Ascending aorta (tissue), 2 donors: ENCODE measurements at regions of chr2 and their contacts with region 1.

Region 1: DNA sequence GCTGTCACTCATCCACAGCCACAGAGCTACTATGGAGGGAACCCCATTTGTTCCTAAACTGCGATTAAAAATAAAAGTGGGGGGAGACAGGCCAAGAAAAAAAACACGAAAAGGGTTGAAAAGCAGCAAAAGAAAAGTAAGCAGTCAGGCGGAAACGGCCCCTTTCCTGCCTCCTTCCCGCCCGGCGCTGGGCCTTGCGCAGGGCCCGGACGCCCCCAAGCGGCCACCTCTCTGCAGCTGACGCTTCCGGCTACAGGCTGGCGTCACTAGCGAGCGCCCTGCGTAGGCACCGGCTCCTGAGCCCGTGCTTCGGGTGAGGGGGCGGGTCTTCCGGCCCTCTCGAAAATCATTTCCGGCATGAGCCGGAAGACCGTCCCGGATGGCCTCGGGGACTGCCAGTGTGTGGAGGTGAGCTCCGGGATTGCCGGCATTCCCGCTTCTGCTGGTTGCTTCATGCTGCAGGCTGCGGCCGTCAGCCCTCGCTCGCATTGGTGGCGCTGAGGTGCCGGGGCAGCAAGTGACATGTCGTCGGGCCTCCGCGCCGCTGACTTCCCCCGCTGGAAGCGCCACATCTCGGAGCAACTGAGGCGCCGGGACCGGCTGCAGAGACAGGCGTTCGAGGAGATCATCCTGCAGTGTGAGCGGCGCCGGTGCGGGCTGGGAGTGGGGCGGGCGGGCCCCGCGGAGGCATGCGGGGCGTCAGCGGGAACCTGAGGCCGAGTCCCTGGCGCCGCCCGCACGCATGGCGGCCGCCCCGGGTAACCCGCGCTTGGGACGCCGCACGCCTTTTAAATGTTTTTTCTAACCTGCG is at the start of gene ATG16L1:
- DNase-seq: peak; percentile 78 to 97
- H3K4me3 ChIP-seq: peak within 1 kb of the TSS; percentile 68 to 79
- H3K27ac ChIP-seq: peak within 1 kb of the TSS; percentile 71 to 88
- H3K4me1 ChIP-seq: peaks cover 3 to 14% of the 10 kb centered on the region in 2 donors
- H3K27me3 ChIP-seq: no peaks in the 10 kb centered on the region
- CTCF ChIP-seq: peak; percentile 93 to 96 (median 94)
- total RNA-seq, gene ATG16L1: 28.1 TPM

Region 2: GRCh38 chr2:232600053-232600773 is 651.3 kb before region 1 on chr2:
- intact Hi-C with region 1: loop called (anchors 1 kb)
- DNase-seq: no peak
- H3K4me3 ChIP-seq: no peak overlapping the region
- H3K27ac ChIP-seq: no peak overlapping the region
- H3K4me1 ChIP-seq: no peaks in the 10 kb centered on the region
- H3K27me3 ChIP-seq: no peaks in the 10 kb centered on the region
- CTCF ChIP-seq: no peak

Region 3: GRCh38 chr2:232854082-232854481 is 397.4 kb before region 1 on chr2:
- intact Hi-C with region 1: loop called (anchors 2 kb)
- DNase-seq: no peak
- H3K4me3 ChIP-seq: no peak overlapping the region
- H3K27ac ChIP-seq: no peak overlapping the region
- H3K4me1 ChIP-seq: no peaks in the 10 kb centered on the region
- H3K27me3 ChIP-seq: no peaks in the 10 kb centered on the region
- CTCF ChIP-seq: no peak

Region 4: GRCh38 chr2:233098615-233099014 is 152.9 kb before region 1 on chr2:
- intact Hi-C with region 1: loop called (anchors 5 kb)
- DNase-seq: no peak
- H3K4me3 ChIP-seq: no peak overlapping the region
- H3K27ac ChIP-seq: no peak overlapping the region
- H3K4me1 ChIP-seq: no peaks in the 10 kb centered on the region
- H3K27me3 ChIP-seq: no peaks in the 10 kb centered on the region
- CTCF ChIP-seq: peak in 2 of 3 experiments; percentile 9 to 21

Region 5: DNA sequence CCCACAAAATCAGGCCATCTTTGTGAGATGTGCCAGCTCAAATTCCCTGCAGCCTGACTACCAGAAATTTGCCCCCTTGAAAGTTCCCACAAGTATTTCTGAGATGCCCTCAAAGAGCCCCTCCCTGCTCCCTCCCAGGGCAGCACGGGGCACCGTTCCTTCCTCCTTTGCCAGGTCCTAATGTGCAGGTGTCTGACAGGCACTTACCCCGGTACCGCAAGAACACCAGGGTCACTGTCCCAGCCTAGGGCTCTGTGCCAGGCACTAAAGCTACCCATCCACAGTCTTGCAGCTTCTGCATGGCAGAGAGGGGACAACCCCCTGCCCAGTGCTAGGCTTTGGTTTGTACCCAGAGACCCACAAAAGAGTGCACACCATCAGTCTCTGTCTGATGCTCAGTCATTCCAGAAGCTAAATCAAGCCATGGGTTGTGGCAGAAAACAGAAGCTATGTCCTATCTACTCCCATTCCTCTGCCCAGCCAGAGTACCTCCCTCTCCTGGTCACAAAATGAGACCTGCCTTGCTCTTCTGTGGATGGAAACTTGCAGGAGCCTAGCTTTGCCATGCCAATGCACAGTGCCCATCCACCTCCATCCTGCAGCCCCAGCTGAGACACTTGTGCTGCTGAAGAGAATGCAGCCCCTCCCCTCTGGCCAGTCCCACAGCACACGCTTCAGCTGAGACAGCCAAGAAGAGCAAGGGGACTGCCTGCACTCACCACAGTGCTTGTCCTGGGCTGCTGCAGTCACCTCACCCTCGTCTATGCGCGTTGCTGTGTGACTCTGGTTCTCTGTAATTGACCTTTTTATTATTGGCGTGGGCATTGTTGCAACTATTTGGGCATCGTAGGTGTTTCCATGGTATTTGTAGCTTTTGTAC is 142.7 kb before region 1 on chr2:
- intact Hi-C with region 1: no loop called
- DNase-seq: no peak
- H3K4me3 ChIP-seq: no peak overlapping the region
- H3K27ac ChIP-seq: no peak overlapping the region
- H3K4me1 ChIP-seq: no peaks in the 10 kb centered on the region
- H3K27me3 ChIP-seq: no peaks in the 10 kb centered on the region
- CTCF ChIP-seq: no peak

Region 6: DNA sequence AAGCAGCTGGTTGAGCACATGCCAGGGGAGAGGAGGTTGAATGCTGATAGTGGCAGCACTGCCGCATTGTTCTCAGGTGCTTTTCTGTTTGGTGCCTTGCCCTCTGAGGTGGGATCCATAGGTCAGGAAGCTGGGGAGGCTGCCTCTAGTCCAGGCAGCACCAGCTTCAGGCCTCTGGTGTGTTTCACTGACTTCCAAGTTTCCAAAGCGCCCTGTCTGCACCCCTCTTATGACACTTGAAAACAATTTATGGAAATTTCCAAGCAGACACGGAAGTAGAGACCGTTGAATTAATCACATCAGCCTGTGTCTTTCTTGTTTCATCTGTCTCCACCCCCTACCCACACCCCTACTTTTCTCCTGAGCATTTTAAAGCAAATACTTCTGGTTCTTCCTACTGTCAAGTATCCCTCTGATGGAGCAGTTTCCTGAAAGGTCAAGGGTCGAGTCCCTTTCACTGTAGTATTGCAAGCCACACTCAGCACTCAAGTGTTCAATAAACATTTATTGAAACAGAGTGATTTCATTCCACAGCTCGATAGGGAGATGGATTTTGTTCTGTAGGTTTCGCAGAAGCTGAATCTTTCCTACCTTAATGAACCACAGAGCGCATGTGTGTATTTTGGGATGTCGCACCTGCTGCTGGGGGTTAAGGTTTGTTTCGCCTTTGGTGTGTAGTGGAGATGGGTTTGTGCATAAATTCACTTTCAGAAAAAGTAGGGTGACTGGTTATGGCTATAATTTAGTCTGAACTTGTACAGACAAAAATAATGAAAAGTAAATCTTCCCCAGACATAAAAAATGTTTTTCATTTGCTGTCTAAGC is 124.2 kb after region 1 on chr2:
- intact Hi-C with region 1: no loop called
- DNase-seq: peak in 1 of 2 donors; percentile 30
- H3K4me3 ChIP-seq: no peak overlapping the region
- H3K27ac ChIP-seq: no peak overlapping the region
- H3K4me1 ChIP-seq: peaks cover 0 to 4% of the 10 kb centered on the region in 2 donors
- H3K27me3 ChIP-seq: no peaks in the 10 kb centered on the region
- CTCF ChIP-seq: no peak